ENCODE measurements at regions of chr12 and their contacts with region 1.

Region 1: GRCh38 chr12:56315622-56316473 is at the start of gene CNPY2:
- DNase-seq: peak; percentile 86 to 98 (median 93)
- ATAC-seq: peak; percentile 92
- H3K4me3 Mint-ChIP-seq: peak within 1 kb of the TSS; percentile 95 to 100 (median 98)
- H3K27ac Mint-ChIP-seq: peak within 1 kb of the TSS; percentile 96 to 100 (median 98)
- H3K4me1 Mint-ChIP-seq: peaks cover 5 to 18% (median 17%) of the 10 kb centered on the region in 4 donors
- H3K27me3 Mint-ChIP-seq: no peaks in the 10 kb centered on the region
- polyA plus RNA-seq, gene CNPY2: 173 to 196 (median 179) TPM

Region 2: DNA sequence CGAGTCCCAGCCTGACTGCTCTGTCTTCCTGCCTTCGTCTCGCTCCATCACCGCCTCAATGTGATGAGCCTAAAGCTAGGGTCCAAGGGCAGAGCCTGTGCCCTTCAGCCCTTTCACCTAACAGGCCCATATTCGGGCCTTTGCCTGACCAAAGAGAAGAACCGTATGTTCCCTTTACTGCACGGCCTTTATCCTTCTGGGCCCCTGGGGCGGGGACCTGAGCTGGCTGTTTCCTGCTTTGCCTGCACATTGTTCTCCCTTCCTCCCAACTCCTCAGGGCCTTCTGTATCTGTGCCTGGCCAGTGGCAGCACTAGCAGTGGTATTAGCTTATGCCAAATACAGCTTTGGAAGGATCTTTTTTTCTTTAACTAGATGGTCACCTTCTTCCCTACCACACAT is 172.0 kb before region 1 on chr12:
- POLR2A ChIA-PET with region 1: interaction called, 10 read pairs
- DNase-seq: no peak
- ATAC-seq: no peak
- H3K4me3 Mint-ChIP-seq: no peak overlapping the region
- H3K27ac Mint-ChIP-seq: peak overlapping the region; percentile 16 to 91 (median 86)
- H3K4me1 Mint-ChIP-seq: peaks cover 16 to 56% (median 49%) of the 10 kb centered on the region in 4 donors
- H3K27me3 Mint-ChIP-seq: no peaks in the 10 kb centered on the region

Region 3: DNA sequence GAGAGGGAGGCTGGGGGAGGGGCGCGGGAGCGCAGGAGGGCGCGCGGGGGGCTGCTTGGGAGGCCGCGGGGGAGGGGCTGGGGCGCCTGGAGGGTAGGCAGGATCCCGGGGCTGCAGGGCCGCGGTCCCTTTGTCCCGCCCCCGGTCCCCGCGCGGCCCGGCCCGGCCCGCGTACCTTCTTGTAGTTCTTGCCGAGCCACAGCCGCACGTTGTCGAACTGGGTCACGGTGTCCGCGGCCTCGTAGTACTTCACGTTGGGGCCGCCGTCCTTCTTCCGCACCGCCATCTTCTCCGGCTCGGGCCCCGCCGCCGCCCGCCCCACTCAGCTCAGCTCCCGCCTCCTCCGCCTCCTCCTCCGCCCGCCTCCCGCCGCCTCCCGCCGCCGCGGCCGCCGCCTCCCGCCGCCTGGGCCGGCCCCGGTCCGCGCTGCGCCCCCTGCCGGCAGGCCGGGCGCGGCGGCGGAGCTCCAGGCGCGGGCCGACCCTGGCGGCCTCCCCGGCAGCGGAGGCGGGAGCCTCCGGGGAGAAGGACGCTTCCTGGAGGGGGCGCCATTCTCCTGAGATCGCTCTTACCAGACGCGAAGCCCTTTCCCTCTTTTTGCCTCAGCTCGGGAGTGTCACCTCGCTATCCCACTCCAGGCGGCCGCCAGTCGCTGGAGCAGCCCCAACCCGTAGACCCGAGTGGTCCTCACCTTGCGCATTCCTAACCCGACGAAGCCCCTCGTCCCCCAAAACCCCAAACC is 126.5 kb before region 1 on chr12 and contains the start of gene SMARCC2:
- POLR2A ChIA-PET with region 1: interaction called, 10 read pairs
- DNase-seq: peak; percentile 74 to 91 (median 82)
- ATAC-seq: peak; percentile 82 to 84
- H3K4me3 Mint-ChIP-seq: peak within 1 kb of the TSS; percentile 89 to 99 (median 96)
- H3K27ac Mint-ChIP-seq: peak within 1 kb of the TSS; percentile 97 to 100 (median 98)
- H3K4me1 Mint-ChIP-seq: peaks cover 39 to 51% (median 43%) of the 10 kb centered on the region in 4 donors
- H3K27me3 Mint-ChIP-seq: peaks cover 0 to 3% (median 0%) of the 10 kb centered on the region in 5 donors
- polyA plus RNA-seq, gene SMARCC2: 46.3 to 70.4 (median 54.1) TPM

Region 4: DNA sequence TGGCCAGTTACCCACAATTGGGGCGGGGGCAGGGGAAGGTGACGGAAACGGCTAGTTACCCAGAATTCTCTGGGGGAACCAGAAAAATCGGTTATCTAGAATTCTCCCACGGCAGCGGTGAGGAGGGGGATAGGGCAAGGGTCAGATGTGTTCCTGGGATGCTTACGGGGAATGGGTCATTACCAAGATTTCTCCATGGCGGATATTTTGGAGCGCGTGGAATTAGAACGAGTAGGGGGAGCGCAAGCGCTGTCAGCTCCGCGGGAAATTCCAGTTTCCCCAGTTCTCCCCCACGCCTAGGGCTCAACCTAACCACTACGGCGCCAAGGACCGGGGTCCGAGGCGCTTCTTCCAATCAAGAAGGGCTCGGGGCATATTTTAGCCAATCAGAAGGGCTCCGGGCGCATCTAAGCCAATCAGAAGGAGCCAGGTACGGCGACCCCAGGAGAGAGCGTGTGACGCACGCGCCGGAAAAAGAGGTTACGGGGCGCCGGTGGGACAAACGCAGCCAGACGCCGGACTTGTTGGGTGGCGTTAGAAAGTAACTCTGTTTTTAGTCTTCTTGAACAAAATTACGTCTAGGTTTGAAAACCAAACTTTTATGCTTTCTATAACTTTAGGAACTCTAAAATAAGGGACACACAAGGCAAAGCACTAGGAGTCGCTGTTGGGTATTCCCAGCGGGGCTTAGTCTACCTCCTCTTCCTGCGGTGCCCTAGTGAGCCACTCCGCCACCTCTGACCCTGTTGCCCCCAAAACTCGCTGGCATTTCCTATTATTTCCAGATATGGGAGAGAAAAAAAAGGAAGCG is 18.0 kb after region 1 on chr12 and contains the start of gene PAN2:
- POLR2A ChIA-PET with region 1: interaction called, 38 read pairs
- DNase-seq: peak; percentile 78 to 96 (median 93)
- ATAC-seq: peak; percentile 81 to 87
- H3K4me3 Mint-ChIP-seq: peak within 1 kb of the TSS; percentile 87 to 99 (median 94)
- H3K27ac Mint-ChIP-seq: peak within 1 kb of the TSS; percentile 99 to 100 (median 99)
- H3K4me1 Mint-ChIP-seq: peaks cover 20 to 53% (median 47%) of the 10 kb centered on the region in 4 donors
- H3K27me3 Mint-ChIP-seq: peaks cover 0 to 1% (median 0%) of the 10 kb centered on the region in 5 donors
- polyA plus RNA-seq, gene PAN2: 10.5 to 11.9 (median 11.0) TPM

Region 5: GRCh38 chr12:56359851-56360767 is 44.3 kb after region 1 on chr12 and contains the start of gene STAT2:
- POLR2A ChIA-PET with region 1: interaction called, 53 read pairs
- DNase-seq: peak; percentile 95 to 100 (median 99)
- ATAC-seq: peak; percentile 95 to 96
- H3K4me3 Mint-ChIP-seq: peak within 1 kb of the TSS; percentile 93 to 99 (median 96)
- H3K27ac Mint-ChIP-seq: peak within 1 kb of the TSS; percentile 93 to 99 (median 96)
- H3K4me1 Mint-ChIP-seq: peaks cover 8 to 38% (median 36%) of the 10 kb centered on the region in 4 donors
- H3K27me3 Mint-ChIP-seq: peaks cover 0 to 1% (median 0%) of the 10 kb centered on the region in 5 donors
- polyA plus RNA-seq, gene STAT2: 61.7 to 68.1 (median 64.5) TPM

Region 6: GRCh38 chr12:56448860-56449621 is 133.2 kb after region 1 on chr12 and contains the start of gene TIMELESS:
- POLR2A ChIA-PET with region 1: interaction called, 10 read pairs
- DNase-seq: peak; percentile 72 to 95 (median 80)
- ATAC-seq: peak; percentile 97 to 98
- H3K4me3 Mint-ChIP-seq: peak within 1 kb of the TSS; percentile 88 to 95 (median 92)
- H3K27ac Mint-ChIP-seq: peak within 1 kb of the TSS; percentile 93 to 97 (median 95)
- H3K4me1 Mint-ChIP-seq: peaks cover 12 to 28% (median 14%) of the 10 kb centered on the region in 4 donors
- H3K27me3 Mint-ChIP-seq: no peaks in the 10 kb centered on the region
- polyA plus RNA-seq, gene TIMELESS: 3.3 to 4.2 (median 3.5) TPM

Region 7: GRCh38 chr12:56468216-56469006 is 152.6 kb after region 1 on chr12 and contains the start of gene SPRYD4:
- POLR2A ChIA-PET with region 1: interaction called, 19 read pairs
- DNase-seq: peak; percentile 91 to 96 (median 93)
- ATAC-seq: peak; percentile 94 to 96
- H3K4me3 Mint-ChIP-seq: peak within 1 kb of the TSS; percentile 90 to 98 (median 96)
- H3K27ac Mint-ChIP-seq: peak within 1 kb of the TSS; percentile 96 to 99 (median 98)
- H3K4me1 Mint-ChIP-seq: peaks cover 19 to 42% (median 35%) of the 10 kb centered on the region in 4 donors
- H3K27me3 Mint-ChIP-seq: no peaks in the 10 kb centered on the region
- polyA plus RNA-seq, gene SPRYD4: 1.3 to 1.6 (median 1.4) TPM

Region 8: GRCh38 chr12:56488041-56488955 is 172.4 kb after region 1 on chr12 and contains the start of gene GLS2:
- POLR2A ChIA-PET with region 1: no interaction called
- DNase-seq: peak; percentile 56 to 89 (median 75)
- ATAC-seq: peak; percentile 94 to 97
- H3K4me3 Mint-ChIP-seq: peak within 1 kb of the TSS; percentile 88 to 95 (median 94)
- H3K27ac Mint-ChIP-seq: peak within 1 kb of the TSS; percentile 66 to 94 (median 89)
- H3K4me1 Mint-ChIP-seq: peaks cover 8 to 20% (median 18%) of the 10 kb centered on the region in 4 donors
- H3K27me3 Mint-ChIP-seq: peaks cover 4 to 18% (median 9%) of the 10 kb centered on the region in 5 donors
- polyA plus RNA-seq, gene GLS2: 3.2 to 6.5 (median 6.4) TPM

Measured in naive thymus-derived CD8-positive, alpha-beta T cell (primary cell).